Naive thymus-derived CD4-positive, alpha-beta T cell (primary cell): ENCODE measurements at regions of chr19 and their contacts with region 1.

Region 1: GRCh38 chr19:47047763-47048405 is 540 bp downstream of the TMEM160 start:
- DNase-seq: peak; percentile 41 to 80 (median 58)
- ATAC-seq: peak; percentile 57
- H3K4me3 ChIP-seq: peak overlapping the region; percentile 86
- H3K4me3 Mint-ChIP-seq: peak overlapping the region; percentile 89 to 100 (median 97)
- H3K27ac ChIP-seq: peak overlapping the region; percentile 79
- H3K27ac Mint-ChIP-seq: peak overlapping the region; percentile 82 to 96 (median 93)
- H3K4me1 ChIP-seq: peaks cover 6 to 7% of the 10 kb centered on the region in 2 donors
- H3K4me1 Mint-ChIP-seq: peaks cover 10 to 22% (median 16%) of the 10 kb centered on the region in 7 donors
- H3K27me3 ChIP-seq: no peaks in the 10 kb centered on the region
- H3K27me3 Mint-ChIP-seq: peaks cover 0 to 2% (median 0%) of the 10 kb centered on the region in 5 donors

Region 2: GRCh38 chr19:46614114-46614722 is 433.7 kb before region 1 on chr19:
- CTCF ChIA-PET with region 1: no interaction called
- POLR2A ChIA-PET with region 1: no interaction called
- intact Hi-C with region 1: no loop called
- DNase-seq: peak in 8 of 9 donors; percentile 70 to 83 (median 77)
- ATAC-seq: peak; percentile 79
- H3K4me3 ChIP-seq: no peak overlapping the region
- H3K4me3 Mint-ChIP-seq: peak overlapping the region; percentile 40 to 77 (median 71)
- H3K27ac ChIP-seq: peak overlapping the region; percentile 65
- H3K27ac Mint-ChIP-seq: peak overlapping the region; percentile 79 to 93 (median 89)
- H3K4me1 ChIP-seq: peaks cover 24 to 84% of the 10 kb centered on the region in 2 donors
- H3K4me1 Mint-ChIP-seq: peaks cover 55 to 85% (median 77%) of the 10 kb centered on the region in 7 donors
- H3K27me3 ChIP-seq: no peaks in the 10 kb centered on the region
- H3K27me3 Mint-ChIP-seq: no peaks in the 10 kb centered on the region

Region 3: GRCh38 chr19:46746281-46747013 is 301.4 kb before region 1 on chr19 and contains the start of gene STRN4:
- CTCF ChIA-PET with region 1: no interaction called
- POLR2A ChIA-PET with region 1: no interaction called
- intact Hi-C with region 1: loop called in 1 of 2 experiments (anchors 1 kb)
- DNase-seq: peak in 8 of 9 donors; percentile 29 to 65 (median 50)
- ATAC-seq: peak; percentile 87
- H3K4me3 ChIP-seq: peak within 1 kb of the TSS; percentile 73
- H3K4me3 Mint-ChIP-seq: peak within 1 kb of the TSS; percentile 84 to 97 (median 90)
- H3K27ac ChIP-seq: peak within 1 kb of the TSS; percentile 91
- H3K27ac Mint-ChIP-seq: peak within 1 kb of the TSS; percentile 74 to 94 (median 87)
- H3K4me1 ChIP-seq: peaks cover 21 to 26% of the 10 kb centered on the region in 2 donors
- H3K4me1 Mint-ChIP-seq: peaks cover 43 to 64% (median 58%) of the 10 kb centered on the region in 7 donors
- H3K27me3 ChIP-seq: no peaks in the 10 kb centered on the region
- H3K27me3 Mint-ChIP-seq: no peaks in the 10 kb centered on the region
- total RNA-seq, gene STRN4: 81.3 to 120 (median 90.4) TPM

Region 4: DNA sequence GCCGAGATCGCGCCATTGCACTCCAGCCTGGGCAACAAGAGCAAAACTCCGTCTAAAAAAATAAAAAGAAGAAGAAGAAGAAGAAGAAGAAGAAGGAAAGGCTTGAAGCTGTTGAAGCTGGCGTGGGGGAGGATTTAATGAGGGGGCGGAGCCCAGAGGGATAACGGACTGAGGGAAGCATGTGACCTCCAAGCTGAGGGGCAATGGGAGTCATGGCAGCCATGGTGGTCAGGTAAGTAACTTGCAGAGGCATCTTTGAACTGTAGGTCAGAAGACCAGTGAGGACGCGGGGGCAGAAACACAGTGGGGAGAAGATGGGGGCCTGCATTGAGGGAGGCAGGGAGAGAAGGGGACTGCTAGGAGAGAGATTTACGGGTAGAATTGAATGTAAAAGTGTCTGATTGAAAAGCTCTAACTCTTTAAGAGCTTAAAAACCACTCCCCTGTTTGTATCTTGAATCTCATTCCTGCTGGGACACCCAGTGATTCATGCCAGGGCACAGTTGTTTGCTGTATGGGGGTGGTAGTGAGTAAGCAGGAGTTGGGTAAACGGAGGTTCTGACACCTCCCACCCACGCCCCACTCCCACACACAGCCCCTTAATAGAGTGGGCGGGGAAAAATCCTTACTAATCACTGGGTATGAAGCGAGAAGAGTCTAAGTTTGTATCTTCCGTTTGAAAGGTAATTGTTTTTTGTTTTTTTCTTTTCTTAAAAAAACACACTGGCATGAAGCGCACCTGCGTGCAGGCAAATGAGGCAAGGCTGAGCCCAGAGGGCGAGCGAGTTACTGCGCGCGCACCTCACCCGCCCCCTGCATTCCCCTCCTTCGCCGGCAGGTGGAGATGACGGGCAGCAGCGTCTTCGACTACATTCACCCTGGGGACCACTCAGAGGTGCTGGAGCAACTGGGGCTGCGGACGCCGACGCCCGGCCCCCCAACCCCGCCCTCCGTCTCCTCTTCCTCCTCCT is 12.5 kb before region 1 on chr19:
- CTCF ChIA-PET with region 1: interaction called, 4 read pairs
- POLR2A ChIA-PET with region 1: interaction called, 4 read pairs
- intact Hi-C with region 1: loop called (anchors 1 kb)
- DNase-seq: peak; percentile 91 to 100 (median 97)
- ATAC-seq: peak; percentile 99
- H3K4me3 ChIP-seq: peak overlapping the region; percentile 74
- H3K4me3 Mint-ChIP-seq: peak overlapping the region; percentile 83 to 97 (median 92)
- H3K27ac ChIP-seq: peak overlapping the region; percentile 62
- H3K27ac Mint-ChIP-seq: peak overlapping the region; percentile 71 to 93 (median 85)
- H3K4me1 ChIP-seq: peaks cover 11 to 13% of the 10 kb centered on the region in 2 donors
- H3K4me1 Mint-ChIP-seq: peaks cover 7 to 23% (median 16%) of the 10 kb centered on the region in 7 donors
- H3K27me3 ChIP-seq: no peaks in the 10 kb centered on the region
- H3K27me3 Mint-ChIP-seq: peaks cover 6 to 26% (median 14%) of the 10 kb centered on the region in 5 donors

Region 5: GRCh38 chr19:47256688-47257443 is 209.0 kb after region 1 on chr19:
- CTCF ChIA-PET with region 1: no interaction called
- POLR2A ChIA-PET with region 1: no interaction called
- intact Hi-C with region 1: loop called (anchors 1 kb)
- DNase-seq: peak; percentile 94 to 100 (median 96)
- ATAC-seq: peak; percentile 88
- H3K4me3 ChIP-seq: peak overlapping the region; percentile 65
- H3K4me3 Mint-ChIP-seq: peak overlapping the region; percentile 85 to 97 (median 90)
- H3K27ac ChIP-seq: peak overlapping the region; percentile 90
- H3K27ac Mint-ChIP-seq: peak overlapping the region; percentile 90 to 99 (median 97)
- H3K4me1 ChIP-seq: peaks cover 15 to 24% of the 10 kb centered on the region in 2 donors
- H3K4me1 Mint-ChIP-seq: peaks cover 35 to 46% (median 39%) of the 10 kb centered on the region in 7 donors
- H3K27me3 ChIP-seq: no peaks in the 10 kb centered on the region
- H3K27me3 Mint-ChIP-seq: peaks cover 0 to 2% (median 0%) of the 10 kb centered on the region in 5 donors

Region 6: GRCh38 chr19:47391510-47392223 is 343.8 kb after region 1 on chr19:
- CTCF ChIA-PET with region 1: no interaction called
- POLR2A ChIA-PET with region 1: no interaction called
- intact Hi-C with region 1: no loop called
- DNase-seq: peak; percentile 56 to 80 (median 74)
- ATAC-seq: peak; percentile 68
- H3K4me3 ChIP-seq: no peak overlapping the region
- H3K4me3 Mint-ChIP-seq: peak overlapping the region in 1 of 10 donors; percentile 17
- H3K27ac ChIP-seq: no peak overlapping the region
- H3K27ac Mint-ChIP-seq: peak overlapping the region in 1 of 9 donors; percentile 67
- H3K4me1 ChIP-seq: no peaks in the 10 kb centered on the region
- H3K4me1 Mint-ChIP-seq: peaks cover 0 to 5% (median 0%) of the 10 kb centered on the region in 7 donors
- H3K27me3 ChIP-seq: no peaks in the 10 kb centered on the region
- H3K27me3 Mint-ChIP-seq: peaks cover 7 to 21% (median 16%) of the 10 kb centered on the region in 5 donors

Region 7: GRCh38 chr19:47600246-47601179 is 552.6 kb after region 1 on chr19:
- CTCF ChIA-PET with region 1: no interaction called
- POLR2A ChIA-PET with region 1: no interaction called
- intact Hi-C with region 1: loop called in 1 of 2 experiments (anchors 1 kb)
- DNase-seq: peak; percentile 86 to 99 (median 97)
- ATAC-seq: peak; percentile 98
- H3K4me3 ChIP-seq: peak overlapping the region; percentile 93
- H3K4me3 Mint-ChIP-seq: peak overlapping the region; percentile 79 to 91 (median 84)
- H3K27ac ChIP-seq: peak overlapping the region; percentile 81
- H3K27ac Mint-ChIP-seq: peak overlapping the region; percentile 75 to 94 (median 90)
- H3K4me1 ChIP-seq: peaks cover 0 to 7% of the 10 kb centered on the region in 2 donors
- H3K4me1 Mint-ChIP-seq: peaks cover 6 to 43% (median 21%) of the 10 kb centered on the region in 7 donors
- H3K27me3 ChIP-seq: no peaks in the 10 kb centered on the region
- H3K27me3 Mint-ChIP-seq: peaks cover 0 to 2% (median 0%) of the 10 kb centered on the region in 5 donors